ENCODE measurements at regions of chr9 and their contacts with region 1.

Region 1: DNA sequence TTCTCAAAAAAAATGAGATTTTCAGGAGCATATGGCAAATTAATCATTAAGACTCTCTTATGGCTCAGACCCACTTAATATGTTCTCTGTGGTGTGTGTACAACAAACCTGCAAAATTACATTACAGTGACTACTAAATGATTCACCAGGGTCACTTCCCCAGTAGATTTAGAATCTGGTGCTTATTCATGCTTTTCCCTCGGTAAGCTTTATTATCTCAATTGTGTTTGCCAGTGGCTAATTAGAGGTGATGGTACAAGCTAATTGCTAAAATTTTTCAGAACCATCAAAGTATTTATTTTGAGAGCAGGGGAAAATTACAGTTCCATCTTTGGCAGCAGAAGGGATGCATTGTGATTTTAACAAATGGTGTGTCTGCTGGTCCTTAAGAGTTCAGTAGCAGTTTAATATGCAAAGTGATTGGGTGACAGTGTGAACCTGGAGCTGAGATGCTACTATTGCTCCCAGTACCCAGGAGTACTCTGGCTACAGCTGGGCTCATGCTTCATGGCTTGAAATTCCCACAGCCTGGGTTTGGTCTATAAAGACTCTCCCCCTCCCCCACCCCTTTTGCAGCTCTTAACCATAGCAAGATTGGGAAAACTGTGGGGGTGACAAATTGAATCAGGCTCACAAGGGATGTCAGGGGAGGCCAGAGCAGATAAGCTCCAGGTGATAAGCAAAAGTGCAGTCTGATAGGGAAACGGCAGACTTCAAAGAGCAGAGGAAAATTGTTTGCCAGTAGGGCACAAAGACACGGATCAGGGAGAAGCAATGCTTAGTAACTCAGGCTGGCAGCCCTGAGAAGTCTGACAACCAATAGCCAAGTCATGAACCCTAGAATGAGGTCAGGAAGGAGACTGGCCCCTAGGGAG is 92.8 kb upstream of the RAD23B start:
- DNase-seq: no peak
- ATAC-seq: peak; percentile 77
- H3K4me3 ChIP-seq: no peak overlapping the region
- H3K27ac ChIP-seq: no peak overlapping the region
- H3K4me1 ChIP-seq: no peaks in the 10 kb centered on the region
- H3K27me3 ChIP-seq: no peaks in the 10 kb centered on the region
- CTCF ChIP-seq: no peak
- EP300 ChIP-seq: no peak
- POLR2A ChIP-seq: no peak
- RAD21 ChIP-seq: no peak

Region 2: DNA sequence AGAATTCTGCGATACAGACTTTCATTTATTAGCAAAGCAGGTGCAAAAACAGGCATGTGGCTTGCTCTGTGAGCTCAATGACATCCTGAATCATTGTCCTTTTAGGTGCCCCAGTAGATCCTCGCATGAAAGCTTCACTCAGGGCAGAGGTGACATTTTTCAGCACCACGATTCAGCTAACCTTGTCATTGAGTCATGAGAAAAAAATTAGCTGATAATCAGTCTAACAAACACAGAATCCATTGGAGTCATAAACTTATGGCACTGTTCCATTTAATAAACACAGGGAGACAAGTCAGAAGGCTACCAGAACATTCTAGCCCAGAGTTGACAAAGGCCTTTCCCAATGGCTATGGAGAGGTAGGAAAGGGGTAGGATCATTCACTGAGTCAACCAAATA is 12.0 kb before region 1 on chr9:
- CTCF ChIA-PET with region 1: interaction called, 12 read pairs
- POLR2A ChIA-PET with region 1: interaction called, 12 read pairs
- RAD21 ChIA-PET with region 1: interaction called, 51 read pairs
- SMC1A ChIA-PET with region 1: interaction called, 119 read pairs
- in situ Hi-C with region 1: no loop called
- intact Hi-C with region 1: no loop called
- DNase-seq: no peak
- ATAC-seq: no peak
- H3K4me3 ChIP-seq: no peak overlapping the region
- H3K27ac ChIP-seq: no peak overlapping the region
- H3K4me1 ChIP-seq: peaks cover 13% of the 10 kb centered on the region
- H3K27me3 ChIP-seq: no peaks in the 10 kb centered on the region
- CTCF ChIP-seq: no peak
- EP300 ChIP-seq: no peak
- POLR2A ChIP-seq: no peak
- RAD21 ChIP-seq: no peak

Region 3: DNA sequence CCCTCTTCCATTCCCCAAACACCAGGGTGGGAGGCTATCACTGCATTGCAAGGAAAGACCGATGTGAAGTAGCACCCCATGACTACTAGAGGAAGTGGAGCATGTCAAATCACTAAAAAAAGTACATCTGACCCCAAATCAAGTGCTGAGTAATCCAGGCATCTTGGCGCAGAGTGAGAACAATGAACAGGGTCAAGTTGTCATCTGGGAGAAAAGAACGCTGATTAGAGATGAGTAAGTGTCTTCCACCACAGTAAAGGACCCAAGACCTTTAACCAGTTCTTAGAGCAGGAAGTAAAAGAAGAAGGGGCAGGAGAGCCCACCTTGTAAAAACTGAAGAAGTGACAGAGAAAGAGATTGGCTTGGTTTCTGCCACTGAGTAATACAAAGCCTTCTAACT is 17.8 kb after region 1 on chr9:
- CTCF ChIA-PET with region 1: interaction called, 3 read pairs
- POLR2A ChIA-PET with region 1: interaction called, 3 read pairs
- RAD21 ChIA-PET with region 1: interaction called, 5 read pairs
- SMC1A ChIA-PET with region 1: interaction called, 12 read pairs
- in situ Hi-C with region 1: no loop called
- intact Hi-C with region 1: no loop called
- DNase-seq: no peak
- ATAC-seq: peak; percentile 70
- H3K4me3 ChIP-seq: no peak overlapping the region
- H3K27ac ChIP-seq: no peak overlapping the region
- H3K4me1 ChIP-seq: peaks cover 1% of the 10 kb centered on the region; the same call in 1 of the 2 replicates
- H3K27me3 ChIP-seq: no peaks in the 10 kb centered on the region
- CTCF ChIP-seq: no peak
- EP300 ChIP-seq: no peak
- POLR2A ChIP-seq: no peak
- RAD21 ChIP-seq: no peak